Naive thymus-derived CD8-positive, alpha-beta T cell (primary cell): ENCODE measurements at regions of chr13 and their contacts with region 1.

Region 1: DNA sequence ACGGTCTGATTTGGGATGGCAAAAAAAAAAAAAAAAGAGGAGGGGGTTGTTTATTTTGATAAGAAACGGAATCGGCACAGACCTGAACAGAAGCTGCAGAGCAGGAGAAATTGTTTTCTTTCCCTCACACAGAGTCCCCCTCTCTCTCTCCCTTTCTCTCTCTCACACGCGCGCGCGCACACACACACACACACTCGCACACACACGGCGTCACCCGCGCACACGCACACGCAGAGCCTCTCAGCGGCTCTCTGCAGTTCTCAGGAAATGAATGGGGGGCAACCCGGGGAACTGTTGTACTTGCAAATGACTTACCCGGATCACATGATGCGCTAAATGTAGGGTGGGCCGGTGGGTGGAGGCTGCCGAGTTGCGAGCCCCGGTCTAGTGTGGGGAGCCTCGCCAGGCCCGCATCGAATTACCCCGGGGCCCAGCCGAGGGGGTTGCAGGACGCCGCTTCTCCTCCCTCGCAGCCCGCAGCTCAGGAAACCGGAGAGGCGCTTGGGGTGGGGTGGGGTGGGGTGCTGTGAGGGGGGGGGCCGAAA is 475 bp downstream of the KLF12 start:
- DNase-seq: peak; percentile 77 to 99 (median 94)
- ATAC-seq: peak; percentile 62 to 69
- H3K4me3 Mint-ChIP-seq: peak overlapping the region in 9 of 10 donors; percentile 93 to 100 (median 97)
- H3K27ac Mint-ChIP-seq: peak overlapping the region in 9 of 10 donors; percentile 96 to 100 (median 99)
- H3K4me1 Mint-ChIP-seq: peaks cover 16 to 42% (median 35%) of the 10 kb centered on the region in 4 donors
- H3K27me3 Mint-ChIP-seq: peaks cover 0 to 2% (median 0%) of the 10 kb centered on the region in 5 donors

Region 2: DNA sequence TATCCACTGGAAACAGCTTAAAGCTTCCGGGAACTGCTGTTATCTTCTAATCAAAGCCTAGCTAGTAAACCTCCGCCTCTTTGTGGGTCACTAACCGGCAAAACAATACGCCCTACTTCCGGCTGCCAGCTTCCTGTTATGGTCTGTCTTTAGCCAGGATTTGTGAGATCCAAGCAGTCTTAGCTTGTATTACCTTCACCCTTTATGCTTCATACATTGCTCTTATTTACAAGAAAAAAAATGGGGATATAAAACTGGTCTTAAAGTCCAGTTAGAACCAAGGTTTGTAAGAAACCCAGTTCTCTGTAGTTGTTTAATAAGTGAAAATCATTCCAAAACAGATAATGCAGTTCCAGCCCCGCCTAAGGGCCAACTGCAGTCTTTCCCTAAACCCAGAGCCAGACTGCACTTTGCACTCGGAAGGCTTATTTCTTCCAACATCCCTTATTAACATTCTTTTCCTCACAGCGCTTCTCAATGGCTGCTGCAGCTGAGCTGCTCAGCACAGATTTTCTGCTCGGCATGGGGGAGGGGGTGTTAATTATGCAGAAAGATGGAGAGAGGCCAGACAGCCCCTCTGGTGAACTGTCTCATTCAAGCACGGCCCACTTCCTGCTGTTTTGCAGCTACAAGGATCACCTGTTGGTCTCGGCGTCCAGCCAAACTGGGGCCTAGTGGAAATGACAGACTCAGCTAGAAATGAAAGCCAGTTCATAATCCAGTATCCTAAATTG is 367.9 kb before region 1 on chr13:
- POLR2A ChIA-PET with region 1: interaction called, 38 read pairs
- DNase-seq: peak; percentile 69 to 95 (median 84)
- ATAC-seq: peak; percentile 83 to 91
- H3K4me3 Mint-ChIP-seq: peak overlapping the region; percentile 79 to 89 (median 86)
- H3K27ac Mint-ChIP-seq: peak overlapping the region; percentile 92 to 100 (median 98)
- H3K4me1 Mint-ChIP-seq: peaks cover 44 to 87% (median 81%) of the 10 kb centered on the region in 4 donors
- H3K27me3 Mint-ChIP-seq: no peaks in the 10 kb centered on the region

Region 3: GRCh38 chr13:74015137-74015536 is 118.6 kb before region 1 on chr13:
- POLR2A ChIA-PET with region 1: no interaction called
- DNase-seq: no peak
- ATAC-seq: peak; percentile 35 to 48
- H3K4me3 Mint-ChIP-seq: no peak overlapping the region
- H3K27ac Mint-ChIP-seq: no peak overlapping the region
- H3K4me1 Mint-ChIP-seq: peaks cover 16 to 62% (median 51%) of the 10 kb centered on the region in 4 donors
- H3K27me3 Mint-ChIP-seq: no peaks in the 10 kb centered on the region

Region 4: GRCh38 chr13:74026753-74027152 is 107.0 kb before region 1 on chr13:
- POLR2A ChIA-PET with region 1: interaction called, 16 read pairs
- DNase-seq: peak; percentile 33 to 76 (median 67)
- ATAC-seq: peak; percentile 91 to 97
- H3K4me3 Mint-ChIP-seq: peak overlapping the region; percentile 70 to 94 (median 88)
- H3K27ac Mint-ChIP-seq: peak overlapping the region; percentile 90 to 97 (median 94)
- H3K4me1 Mint-ChIP-seq: peaks cover 30 to 87% (median 83%) of the 10 kb centered on the region in 4 donors
- H3K27me3 Mint-ChIP-seq: no peaks in the 10 kb centered on the region

Region 5: DNA sequence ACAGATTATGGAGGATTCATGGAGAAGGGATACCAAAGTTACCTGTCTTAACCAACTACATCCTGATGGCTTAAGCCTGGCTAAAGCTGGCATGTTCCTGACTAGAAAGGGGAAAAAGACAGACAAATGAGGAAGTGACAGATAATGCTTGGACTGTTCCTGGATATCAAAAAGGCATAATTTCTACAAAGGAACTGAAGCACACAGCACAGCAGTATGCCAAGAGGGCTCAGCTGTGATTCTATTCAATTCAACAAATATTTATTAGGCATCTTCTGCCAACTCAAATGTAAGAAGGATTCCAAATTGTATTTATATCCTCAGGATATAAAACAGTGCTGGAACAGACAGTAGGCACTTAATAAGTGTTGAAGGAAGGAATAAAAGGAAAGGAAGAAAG is 59.0 kb before region 1 on chr13:
- POLR2A ChIA-PET with region 1: interaction called, 10 read pairs
- DNase-seq: no peak
- ATAC-seq: no peak
- H3K4me3 Mint-ChIP-seq: no peak overlapping the region
- H3K27ac Mint-ChIP-seq: peak overlapping the region in 7 of 10 donors; percentile 22 to 78 (median 49)
- H3K4me1 Mint-ChIP-seq: peaks cover 38 to 84% (median 64%) of the 10 kb centered on the region in 4 donors
- H3K27me3 Mint-ChIP-seq: no peaks in the 10 kb centered on the region

Region 6: GRCh38 chr13:74110053-74110452 is 23.7 kb before region 1 on chr13:
- POLR2A ChIA-PET with region 1: no interaction called
- DNase-seq: no peak
- ATAC-seq: no peak
- H3K4me3 Mint-ChIP-seq: peak overlapping the region in 1 of 10 donors; percentile 7
- H3K27ac Mint-ChIP-seq: peak overlapping the region in 4 of 10 donors; percentile 1 to 67 (median 32)
- H3K4me1 Mint-ChIP-seq: peaks cover 42 to 75% (median 64%) of the 10 kb centered on the region in 4 donors
- H3K27me3 Mint-ChIP-seq: no peaks in the 10 kb centered on the region

Region 7: DNA sequence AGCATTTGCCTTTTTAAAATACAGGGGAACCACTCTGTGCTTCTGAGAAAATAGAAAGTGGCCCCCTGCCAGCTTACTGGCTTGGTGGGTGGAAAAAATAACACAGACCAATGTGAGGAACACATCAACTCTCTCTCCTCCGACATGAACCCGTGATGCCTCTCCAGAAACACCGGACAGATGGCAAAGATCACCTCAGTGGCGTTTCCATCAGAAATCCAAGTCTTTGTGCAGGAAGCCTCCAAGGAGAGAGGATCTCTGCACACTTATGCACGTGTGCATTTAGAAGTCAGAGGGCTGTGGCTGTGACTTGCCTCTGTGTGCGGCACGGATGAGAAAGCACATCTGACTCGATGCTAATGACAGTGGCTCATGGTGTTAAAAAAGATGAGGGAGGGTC is 112.8 kb after region 1 on chr13:
- POLR2A ChIA-PET with region 1: interaction called, 49 read pairs
- DNase-seq: peak in 3 of 10 donors; percentile 30 to 40 (median 34)
- ATAC-seq: peak; percentile 35 to 48
- H3K4me3 Mint-ChIP-seq: peak overlapping the region; percentile 60 to 88 (median 83)
- H3K27ac Mint-ChIP-seq: peak overlapping the region; percentile 92 to 99 (median 94)
- H3K4me1 Mint-ChIP-seq: peaks cover 53 to 96% (median 95%) of the 10 kb centered on the region in 4 donors
- H3K27me3 Mint-ChIP-seq: no peaks in the 10 kb centered on the region

Region 8: GRCh38 chr13:74301258-74301935 is 167.7 kb after region 1 on chr13:
- POLR2A ChIA-PET with region 1: no interaction called
- DNase-seq: no peak
- ATAC-seq: no peak
- H3K4me3 Mint-ChIP-seq: no peak overlapping the region
- H3K27ac Mint-ChIP-seq: peak overlapping the region in 1 of 10 donors; percentile 9
- H3K4me1 Mint-ChIP-seq: peaks cover 0 to 23% (median 8%) of the 10 kb centered on the region in 4 donors
- H3K27me3 Mint-ChIP-seq: no peaks in the 10 kb centered on the region